ENCODE measurements at regions of chr7 and their contacts with region 1.

Region 1: GRCh38 chr7:134357492-134357891 is 40.8 kb upstream of the SLC35B4 start:
- DNase-seq: no peak
- H3K4me3 ChIP-seq: no peak overlapping the region
- H3K27ac ChIP-seq: no peak overlapping the region
- H3K27me3 ChIP-seq: peaks cover 10% of the 10 kb centered on the region
- CTCF ChIP-seq: peak; percentile 12; the same call in 1 of the 2 replicates

Region 2: GRCh38 chr7:133861874-133862273 is 495.6 kb before region 1 on chr7:
- CTCF ChIA-PET with region 1: no interaction called
- POLR2A ChIA-PET with region 1: interaction called, 16 read pairs
- DNase-seq: no peak
- H3K4me3 ChIP-seq: no peak overlapping the region
- H3K27ac ChIP-seq: no peak overlapping the region
- H3K27me3 ChIP-seq: no peaks in the 10 kb centered on the region
- CTCF ChIP-seq: no peak

Region 3: DNA sequence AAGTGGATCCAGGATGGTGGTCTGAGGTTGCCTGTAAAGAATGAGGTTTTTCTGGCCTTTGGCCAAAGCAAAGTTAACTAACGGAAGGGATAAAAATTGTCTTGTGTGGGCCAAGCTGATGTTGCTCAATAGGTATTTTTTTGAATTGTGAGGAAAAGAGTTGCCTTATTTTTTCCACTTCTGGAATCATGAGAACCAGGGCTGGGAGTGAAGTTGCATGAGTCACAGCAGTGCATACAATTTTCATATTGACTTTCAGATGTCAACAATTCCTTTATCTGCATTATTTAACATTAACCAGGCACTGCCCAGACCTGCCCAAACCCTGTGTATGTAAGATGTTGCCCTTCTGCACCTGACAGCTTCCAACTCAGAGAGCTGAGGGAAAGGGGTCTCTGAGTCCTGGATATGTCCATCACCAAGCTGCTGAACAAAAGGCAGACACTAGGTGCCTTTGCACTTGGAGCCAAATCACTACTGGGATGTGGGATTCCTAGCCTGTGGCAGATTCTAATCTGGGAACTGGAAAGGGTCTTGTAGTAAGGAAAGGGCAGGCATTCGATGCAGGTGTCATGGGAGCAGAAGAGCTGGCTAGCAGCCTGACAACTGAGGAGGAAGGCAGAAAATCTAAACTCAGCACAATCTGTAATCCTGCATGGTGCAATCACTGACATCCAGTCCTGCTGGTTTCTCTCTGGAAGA is 11.5 kb after region 1 on chr7:
- CTCF ChIA-PET with region 1: interaction called, 11 read pairs
- POLR2A ChIA-PET with region 1: no interaction called
- DNase-seq: peak; percentile 23
- H3K4me3 ChIP-seq: no peak overlapping the region
- H3K27ac ChIP-seq: no peak overlapping the region
- H3K27me3 ChIP-seq: peaks cover 2% of the 10 kb centered on the region
- CTCF ChIP-seq: no peak

Measured in AG04450 (cell line).